ENCODE measurements at regions of chr15 and their contacts with region 1.

Region 1: GRCh38 chr15:88476635-88477060 is 9.1 kb downstream of the MRPS11 start:
- DNase-seq: no peak
- H3K4me3 ChIP-seq: no peak overlapping the region
- H3K27ac ChIP-seq: no peak overlapping the region
- H3K4me1 ChIP-seq: no peaks in the 10 kb centered on the region
- H3K27me3 ChIP-seq: no peaks in the 10 kb centered on the region
- CTCF ChIP-seq: peak; percentile 38 to 60 (median 45)
- EP300 ChIP-seq: no peak
- POLR2A ChIP-seq: no peak

Region 2: GRCh38 chr15:88542342-88542733 is 65.7 kb after region 1 on chr15:
- in situ Hi-C with region 1: no loop called
- intact Hi-C with region 1: loop called (anchors 2 kb)
- DNase-seq: peak; percentile 13
- H3K4me3 ChIP-seq: no peak overlapping the region
- H3K27ac ChIP-seq: peak overlapping the region; percentile 62 to 81 (median 71)
- H3K4me1 ChIP-seq: peaks cover 0 to 14% (median 6%) of the 10 kb centered on the region in 4 donors
- H3K27me3 ChIP-seq: no peaks in the 10 kb centered on the region
- CTCF ChIP-seq: no peak
- EP300 ChIP-seq: no peak
- POLR2A ChIP-seq: no peak

Region 3: DNA sequence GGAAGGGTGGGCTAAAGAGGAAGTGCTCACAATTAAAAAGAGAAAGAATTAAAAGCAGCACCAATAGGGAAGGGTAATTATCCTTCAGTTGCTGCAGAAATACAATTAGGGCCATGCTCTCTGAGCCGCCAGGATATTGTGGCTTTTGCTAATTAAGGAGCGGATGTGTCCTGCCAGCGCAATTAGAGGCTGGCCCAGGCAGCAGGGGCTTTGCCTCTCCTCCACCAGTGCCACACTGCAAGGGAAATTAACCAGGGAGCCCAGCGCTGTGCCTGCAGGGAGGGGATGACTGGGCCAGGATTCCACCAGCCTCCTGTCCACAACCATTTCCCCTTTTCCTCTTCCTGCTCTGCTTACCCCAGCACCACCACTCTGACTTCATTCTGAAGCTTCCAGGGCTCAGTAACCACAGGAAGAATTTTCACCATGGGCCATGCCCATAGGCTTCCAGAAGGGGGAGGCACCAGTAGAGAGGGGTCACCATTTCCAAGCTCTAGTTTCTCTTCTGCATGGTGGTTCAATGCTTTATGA is 134.1 kb after region 1 on chr15:
- in situ Hi-C with region 1: loop called in 3 of 4 experiments (anchors 10 to 25 kb)
- intact Hi-C with region 1: no loop called
- DNase-seq: no peak
- H3K4me3 ChIP-seq: no peak overlapping the region
- H3K27ac ChIP-seq: no peak overlapping the region
- H3K4me1 ChIP-seq: peaks cover 0 to 14% (median 6%) of the 10 kb centered on the region in 4 donors
- H3K27me3 ChIP-seq: peaks cover 51% of the 10 kb centered on the region
- CTCF ChIP-seq: no peak
- EP300 ChIP-seq: no peak
- POLR2A ChIP-seq: no peak

Region 4: DNA sequence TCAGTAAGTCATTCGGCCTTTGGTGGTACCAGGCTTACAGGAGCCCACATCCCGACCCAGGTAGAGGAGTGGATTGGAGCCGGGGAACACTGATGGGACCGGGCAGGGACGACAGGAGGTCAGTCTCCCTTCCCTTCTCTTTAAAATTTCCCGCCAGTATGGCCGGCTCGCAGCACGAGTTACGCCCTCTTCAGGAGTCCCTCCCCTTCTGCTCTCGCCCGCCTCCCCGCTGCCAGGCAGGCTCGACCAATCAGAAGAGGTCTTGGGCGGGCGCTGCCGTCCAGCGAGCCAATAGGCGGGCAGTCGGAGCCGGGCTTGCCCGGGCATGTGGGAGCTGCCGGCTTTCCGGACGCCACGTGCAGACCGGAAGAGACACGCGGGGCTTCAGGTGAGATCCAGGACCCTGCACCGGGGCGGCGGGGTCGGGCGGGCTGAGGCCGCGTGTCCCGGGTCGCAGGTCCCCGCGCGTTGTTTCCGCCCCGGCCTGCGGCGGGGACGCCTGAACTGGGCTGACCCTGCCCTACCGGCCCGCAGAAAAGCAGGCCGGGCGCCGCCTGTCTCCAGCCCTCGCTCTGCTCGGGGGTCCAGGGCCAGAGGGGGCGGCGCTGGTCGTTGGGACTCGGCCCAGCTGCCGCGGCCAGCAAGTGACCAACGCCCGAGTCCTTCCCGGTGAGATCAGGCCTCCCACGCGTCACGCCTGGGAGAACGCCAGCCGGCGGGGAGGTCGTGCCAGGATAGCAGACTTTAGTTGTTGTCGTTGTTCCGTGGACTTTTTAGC is 144.5 kb after region 1 on chr15 and contains the start of gene AEN:
- in situ Hi-C with region 1: loop called in 3 of 4 experiments (anchors 10 to 25 kb)
- intact Hi-C with region 1: no loop called
- DNase-seq: peak; percentile 96
- H3K4me3 ChIP-seq: peak within 1 kb of the TSS; percentile 76 to 96 (median 95)
- H3K27ac ChIP-seq: peak within 1 kb of the TSS; percentile 87 to 94 (median 88)
- H3K4me1 ChIP-seq: peaks cover 13 to 42% (median 30%) of the 10 kb centered on the region in 4 donors
- H3K27me3 ChIP-seq: no peaks in the 10 kb centered on the region
- CTCF ChIP-seq: no peak
- EP300 ChIP-seq: no peak
- POLR2A ChIP-seq: peak; percentile 23
- total RNA-seq, gene AEN: 1.5 to 22.7 (median 8.7) TPM

Measured in transverse colon (tissue), 4 donors.